PC-3 (cell line): ENCODE measurements at regions of chr2 and their contacts with region 1.

Region 1: DNA sequence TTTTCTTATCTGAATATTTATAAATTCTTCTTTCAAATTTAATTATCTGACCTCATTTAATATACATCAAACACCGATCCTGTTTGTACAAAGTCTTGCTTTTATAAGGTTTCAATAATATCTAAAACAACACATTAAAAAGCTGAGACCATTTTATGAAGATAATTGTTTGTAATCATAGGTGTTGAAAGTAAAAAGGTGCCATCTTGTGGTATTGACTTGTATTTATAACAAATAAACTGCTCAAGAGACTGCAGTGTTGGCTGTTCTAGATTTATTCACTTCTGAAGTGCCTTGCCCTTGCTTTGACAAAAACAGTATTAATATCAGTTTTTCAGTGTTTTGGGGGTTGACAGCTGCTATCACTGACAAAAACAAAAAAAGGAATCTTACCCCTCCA is 286.8 kb upstream of the HNMT start:
- DNase-seq: no peak
- ATAC-seq: no peak
- H3K4me3 ChIP-seq: no peak overlapping the region
- H3K27ac ChIP-seq: no peak overlapping the region
- H3K4me1 ChIP-seq: no peaks in the 10 kb centered on the region
- H3K27me3 ChIP-seq: peaks cover 29% of the 10 kb centered on the region
- CTCF ChIP-seq: peak; percentile 47; the same call in 1 of the 2 replicates

Region 2: GRCh38 chr2:136932700-136933099 is 744.8 kb before region 1 on chr2:
- CTCF ChIA-PET with region 1: no interaction called
- POLR2A ChIA-PET with region 1: no interaction called
- intact Hi-C with region 1: loop called (anchors 1 kb)
- DNase-seq: peak; percentile 61
- ATAC-seq: peak; percentile 43; the same call in 1 of the 2 replicates
- H3K4me3 ChIP-seq: no peak overlapping the region
- H3K27ac ChIP-seq: no peak overlapping the region
- H3K4me1 ChIP-seq: no peaks in the 10 kb centered on the region
- H3K27me3 ChIP-seq: peaks cover 10% of the 10 kb centered on the region; the same call in 1 of the 2 replicates
- CTCF ChIP-seq: peak; percentile 80

Region 3: GRCh38 chr2:137056704-137057103 is 620.8 kb before region 1 on chr2:
- CTCF ChIA-PET with region 1: no interaction called
- POLR2A ChIA-PET with region 1: no interaction called
- intact Hi-C with region 1: no loop called
- DNase-seq: no peak
- ATAC-seq: no peak
- H3K4me3 ChIP-seq: no peak overlapping the region
- H3K27ac ChIP-seq: no peak overlapping the region
- H3K4me1 ChIP-seq: no peaks in the 10 kb centered on the region
- H3K27me3 ChIP-seq: peaks cover 53% of the 10 kb centered on the region
- CTCF ChIP-seq: no peak

Region 4: DNA sequence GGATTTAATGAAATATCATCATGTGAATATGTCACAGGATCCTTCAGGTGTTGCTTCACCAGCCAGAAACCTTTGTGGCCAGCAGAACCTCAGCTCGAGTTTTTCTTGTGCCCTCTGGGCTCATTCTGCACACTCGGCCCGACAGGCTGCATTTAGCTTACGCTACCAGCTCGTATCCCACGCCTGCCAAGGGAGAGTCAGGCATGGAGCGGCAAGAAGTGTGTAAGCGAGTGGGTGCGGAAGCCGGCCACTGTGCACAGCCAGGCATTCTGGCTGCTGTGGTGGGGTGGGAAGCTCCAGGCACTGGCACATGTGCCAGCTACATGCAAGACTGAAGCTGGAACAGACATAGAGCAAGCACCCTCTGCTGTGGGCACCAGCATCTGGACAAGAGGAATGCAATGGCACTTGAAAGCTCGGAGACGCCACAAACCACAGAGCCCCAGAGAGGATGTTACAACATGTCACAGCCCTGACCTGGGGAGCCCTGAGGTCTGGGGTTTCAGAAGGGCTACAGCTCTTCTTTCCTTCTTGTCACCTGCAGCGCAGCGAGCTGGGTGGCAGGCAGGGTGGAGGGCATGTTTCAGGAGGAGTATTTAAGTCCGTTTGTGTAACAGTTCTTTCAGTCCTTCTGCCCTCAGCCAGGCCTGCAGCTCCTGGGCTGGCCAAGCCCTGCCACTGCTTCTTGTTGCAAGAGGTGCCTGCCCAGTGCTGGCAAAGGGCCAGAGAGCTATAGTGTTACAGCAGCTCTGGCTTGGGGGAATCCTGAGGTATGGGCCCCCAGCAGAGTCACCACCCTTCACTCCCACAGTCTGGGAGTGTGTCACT is 29.5 kb after region 1 on chr2:
- CTCF ChIA-PET with region 1: no interaction called
- POLR2A ChIA-PET with region 1: no interaction called
- intact Hi-C with region 1: no loop called
- DNase-seq: no peak
- ATAC-seq: no peak
- H3K4me3 ChIP-seq: no peak overlapping the region
- H3K27ac ChIP-seq: no peak overlapping the region
- H3K4me1 ChIP-seq: no peaks in the 10 kb centered on the region
- H3K27me3 ChIP-seq: no peaks in the 10 kb centered on the region
- CTCF ChIP-seq: no peak

Region 5: DNA sequence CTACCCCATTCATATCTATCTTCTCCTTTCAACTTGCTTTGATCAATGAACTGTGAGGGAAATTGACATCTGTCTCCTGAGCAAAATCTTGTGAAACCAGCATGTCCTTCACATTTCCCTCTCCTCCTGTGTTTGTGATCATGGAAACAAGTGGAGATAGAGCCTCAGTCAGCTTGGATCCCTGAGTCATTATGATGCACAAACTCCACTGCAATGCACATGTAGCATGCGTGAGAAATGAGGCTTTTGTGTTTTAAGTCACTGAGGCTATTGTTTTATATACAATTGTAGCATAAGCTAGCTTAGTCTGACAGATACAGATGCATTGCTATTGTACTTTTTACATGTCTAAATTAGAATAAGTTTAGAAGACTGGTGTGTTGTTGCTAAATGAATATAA is 201.7 kb after region 1 on chr2:
- CTCF ChIA-PET with region 1: no interaction called
- POLR2A ChIA-PET with region 1: no interaction called
- intact Hi-C with region 1: no loop called
- DNase-seq: no peak
- ATAC-seq: no peak
- H3K4me3 ChIP-seq: no peak overlapping the region
- H3K27ac ChIP-seq: no peak overlapping the region
- H3K4me1 ChIP-seq: no peaks in the 10 kb centered on the region
- H3K27me3 ChIP-seq: no peaks in the 10 kb centered on the region
- CTCF ChIP-seq: no peak

Region 6: GRCh38 chr2:137964066-137964858 is 286.8 kb after region 1 on chr2 and contains the start of gene HNMT:
- CTCF ChIA-PET with region 1: no interaction called
- POLR2A ChIA-PET with region 1: no interaction called
- intact Hi-C with region 1: no loop called
- DNase-seq: peak; percentile 84
- ATAC-seq: peak; percentile 77
- H3K4me3 ChIP-seq: peak within 1 kb of the TSS; percentile 71
- H3K27ac ChIP-seq: peak within 1 kb of the TSS; percentile 75
- H3K4me1 ChIP-seq: peaks cover 42% of the 10 kb centered on the region
- H3K27me3 ChIP-seq: no peaks in the 10 kb centered on the region
- CTCF ChIP-seq: no peak
- total RNA-seq, gene HNMT: 6.9 and 7.1 TPM in 2 replicates